Vagina (tissue), 2 donors: ENCODE measurements at regions of chr22 and their contacts with region 1.

Region 1: GRCh38 chr22:28009272-28009827 is 90.3 kb upstream of the PITPNB start:
- DNase-seq: no peak
- H3K4me3 ChIP-seq: no peak overlapping the region
- H3K27ac ChIP-seq: no peak overlapping the region
- H3K4me1 ChIP-seq: peaks cover 12% of the 10 kb centered on the region
- H3K27me3 ChIP-seq: no peaks in the 10 kb centered on the region
- CTCF ChIP-seq: peak; percentile 70 to 90 (median 85)
- POLR2A ChIP-seq: no peak

Region 2: DNA sequence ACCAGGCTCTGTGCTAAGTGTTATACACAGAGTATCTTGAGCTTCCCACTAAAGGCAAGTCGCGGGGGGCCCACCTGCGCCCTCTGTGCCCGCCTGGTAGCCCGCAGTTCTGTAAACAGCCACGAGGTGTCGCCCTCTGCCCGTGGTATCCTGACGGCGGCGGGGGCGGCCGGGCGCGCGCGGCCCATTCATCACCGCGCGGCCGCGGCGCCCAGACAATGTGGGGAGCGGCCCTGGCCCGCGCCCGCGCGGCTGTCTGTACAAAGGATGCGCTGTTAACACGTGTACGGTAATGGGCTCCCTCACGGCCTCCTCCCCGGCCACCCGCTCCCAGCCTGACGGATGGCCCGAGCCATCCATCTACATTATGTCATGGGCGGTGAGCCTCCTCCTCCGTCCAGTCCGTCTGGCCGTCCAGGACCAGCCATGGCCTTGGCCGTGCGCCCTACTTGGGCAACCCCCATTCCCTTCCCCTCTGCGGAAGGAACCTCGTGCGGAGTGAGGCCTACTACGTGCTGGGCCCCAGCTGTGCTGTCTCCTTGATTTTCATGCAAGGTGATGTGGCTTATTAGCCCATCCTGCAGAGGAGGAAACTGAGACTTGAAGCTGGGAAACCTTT is 1252.6 kb before region 1 on chr22:
- intact Hi-C with region 1: loop called (anchors 5 kb)
- DNase-seq: no peak
- H3K4me3 ChIP-seq: peak overlapping the region in 1 of 2 donors; percentile 4
- H3K27ac ChIP-seq: no peak overlapping the region
- H3K4me1 ChIP-seq: no peaks in the 10 kb centered on the region
- H3K27me3 ChIP-seq: no peaks in the 10 kb centered on the region
- CTCF ChIP-seq: peak; percentile 78 to 93 (median 79)
- POLR2A ChIP-seq: no peak

Region 3: GRCh38 chr22:27919222-27919941 is 90.0 kb before region 1 on chr22 and contains the start of gene PITPNB:
- intact Hi-C with region 1: loop called (anchors 10 kb)
- DNase-seq: peak in 1 of 2 donors; percentile 97
- H3K4me3 ChIP-seq: peak within 1 kb of the TSS; percentile 89 to 98
- H3K27ac ChIP-seq: peak within 1 kb of the TSS; percentile 96
- H3K4me1 ChIP-seq: peaks cover 55% of the 10 kb centered on the region
- H3K27me3 ChIP-seq: no peaks in the 10 kb centered on the region
- CTCF ChIP-seq: no peak
- POLR2A ChIP-seq: peak in 1 of 2 donors; percentile 42
- total RNA-seq, gene PITPNB: 51.3 TPM

Region 4: DNA sequence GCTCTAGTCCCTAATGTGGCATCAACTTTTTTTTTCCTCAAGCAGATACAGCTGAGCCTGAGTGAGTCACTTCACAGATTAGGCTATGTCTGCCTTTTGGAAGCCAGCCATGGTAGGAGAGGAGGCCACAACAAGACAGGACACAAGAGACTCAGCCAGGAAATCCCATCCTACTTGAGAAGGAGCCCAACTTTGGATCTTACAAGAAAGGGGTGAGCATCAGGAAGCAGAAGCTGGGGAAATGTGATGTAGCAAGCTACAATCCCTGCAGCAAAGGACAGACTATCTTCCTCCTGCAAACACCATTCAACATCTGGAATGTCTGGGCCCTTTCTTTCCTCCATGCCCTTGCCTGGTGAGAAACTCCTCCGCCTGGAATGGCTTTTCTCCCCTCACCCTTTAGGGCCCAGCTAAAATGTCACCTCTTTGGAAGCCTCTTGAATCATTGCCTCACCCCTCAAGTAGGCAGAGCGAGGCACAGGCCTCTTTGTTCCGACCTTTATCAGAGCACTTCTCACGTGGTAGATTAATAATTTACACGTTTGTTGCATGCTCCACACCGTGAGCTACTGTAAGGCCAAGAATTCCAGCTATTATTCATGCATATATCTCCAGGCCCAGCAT is 66.1 kb after region 1 on chr22:
- intact Hi-C with region 1: no loop called
- DNase-seq: no peak
- H3K4me3 ChIP-seq: no peak overlapping the region
- H3K27ac ChIP-seq: no peak overlapping the region
- H3K4me1 ChIP-seq: peaks cover 14% of the 10 kb centered on the region
- H3K27me3 ChIP-seq: no peaks in the 10 kb centered on the region
- CTCF ChIP-seq: no peak
- POLR2A ChIP-seq: no peak